Activated T-helper 1 cell treated with anti-CD3 and anti-CD28 coated beads, Interleukin-12 subunit alpha, Interleukin-12 subunit beta, Interleukin-2, Interleukin-4 antibody, amounts not matched to agents 30 ng/mL and 10 ng/mL and 1 ng/mL, durations not matched to agents 14 hours and 24 hours and 36 hours (primary cell): ENCODE measurements at regions of chr19 and their contacts with region 1.

Region 1: DNA sequence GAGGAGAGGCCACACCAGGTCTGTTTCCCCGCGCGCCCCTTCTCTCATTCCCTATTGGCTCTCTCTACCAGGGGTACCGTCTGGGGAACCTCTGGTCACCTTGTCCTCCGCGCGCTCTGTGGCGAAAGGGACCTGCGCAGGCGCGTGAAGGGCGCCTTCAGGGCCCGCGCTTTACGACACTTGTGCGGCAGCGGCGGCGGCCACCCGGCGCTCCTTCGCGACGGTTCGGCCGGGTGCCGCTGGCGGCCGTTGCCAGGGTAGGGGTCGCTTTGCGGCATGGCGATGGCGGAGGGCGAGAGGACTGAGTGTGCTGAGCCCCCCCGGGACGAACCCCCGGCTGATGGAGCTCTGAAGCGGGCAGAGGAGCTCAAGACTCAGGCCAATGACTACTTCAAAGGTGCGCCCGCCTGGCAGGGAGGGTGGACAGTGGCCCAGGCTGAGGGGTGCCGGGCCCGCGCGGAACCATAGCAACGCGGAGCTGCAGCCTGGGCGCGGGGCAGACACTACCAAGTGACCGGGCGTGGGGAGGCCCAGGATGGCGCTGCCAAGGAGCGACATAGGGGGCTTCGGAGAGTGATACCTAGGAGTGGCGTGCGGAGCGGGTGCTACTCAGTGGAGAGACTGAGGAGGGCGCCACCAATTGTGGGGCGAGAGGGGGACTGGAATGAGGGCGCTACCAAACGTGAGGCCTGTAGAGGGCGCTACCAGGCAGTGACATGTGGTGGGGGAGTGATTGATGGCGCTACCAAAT is at the start of gene PPP5C:
- DNase-seq: peak; percentile 86
- H3K4me3 Mint-ChIP-seq: peak within 1 kb of the TSS; percentile 94
- H3K27ac Mint-ChIP-seq: peak within 1 kb of the TSS; percentile 93
- H3K4me1 Mint-ChIP-seq: peaks cover 48% of the 10 kb centered on the region
- H3K27me3 Mint-ChIP-seq: peaks cover 17% of the 10 kb centered on the region
- total RNA-seq, gene PPP5C: 160 and 173 TPM in 2 replicates

Region 2: GRCh38 chr19:46056536-46056935 is 290.5 kb before region 1 on chr19:
- intact Hi-C with region 1: no loop called
- DNase-seq: no peak
- H3K4me3 Mint-ChIP-seq: no peak overlapping the region
- H3K27ac Mint-ChIP-seq: no peak overlapping the region
- H3K4me1 Mint-ChIP-seq: no peaks in the 10 kb centered on the region
- H3K27me3 Mint-ChIP-seq: peaks cover 27% of the 10 kb centered on the region

Region 3: GRCh38 chr19:46283771-46284170 is 63.2 kb before region 1 on chr19:
- intact Hi-C with region 1: loop called (anchors 1 kb)
- DNase-seq: no peak
- H3K4me3 Mint-ChIP-seq: no peak overlapping the region
- H3K27ac Mint-ChIP-seq: no peak overlapping the region
- H3K4me1 Mint-ChIP-seq: no peaks in the 10 kb centered on the region
- H3K27me3 Mint-ChIP-seq: peaks cover 6% of the 10 kb centered on the region

Region 4: GRCh38 chr19:46361915-46362314 is 14.9 kb after region 1 on chr19:
- intact Hi-C with region 1: loop called (anchors 1 kb)
- DNase-seq: no peak
- H3K4me3 Mint-ChIP-seq: peak overlapping the region; percentile 73
- H3K27ac Mint-ChIP-seq: peak overlapping the region; percentile 53
- H3K4me1 Mint-ChIP-seq: peaks cover 34% of the 10 kb centered on the region
- H3K27me3 Mint-ChIP-seq: no peaks in the 10 kb centered on the region

Region 5: DNA sequence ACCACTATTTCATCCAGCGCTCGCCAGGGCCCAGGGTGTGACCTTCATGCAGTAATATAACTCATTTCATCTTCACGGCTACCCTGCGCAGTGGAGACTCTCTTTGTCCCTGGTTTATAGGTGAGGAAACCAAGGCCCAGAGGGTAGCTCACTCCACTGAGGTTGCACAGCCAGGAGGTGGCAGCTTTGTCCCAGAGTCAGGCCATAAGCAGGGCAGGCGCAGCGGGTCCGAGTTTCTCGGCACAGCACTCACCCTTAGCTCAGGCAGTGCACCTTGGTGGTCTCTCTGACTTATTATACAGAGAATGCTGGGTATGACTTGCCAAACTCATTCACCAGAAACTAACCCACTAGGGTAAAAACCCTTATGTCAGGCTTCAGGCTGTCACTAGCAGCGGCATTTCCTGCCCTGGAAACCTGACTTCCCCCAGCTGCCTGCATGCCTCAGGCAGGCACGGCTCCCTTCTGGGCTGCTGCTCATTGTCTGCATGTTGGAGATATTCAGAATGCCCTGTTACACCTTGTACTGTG is 24.4 kb after region 1 on chr19:
- intact Hi-C with region 1: loop called (anchors 2 kb)
- DNase-seq: no peak
- H3K4me3 Mint-ChIP-seq: no peak overlapping the region
- H3K27ac Mint-ChIP-seq: peak overlapping the region; percentile 61
- H3K4me1 Mint-ChIP-seq: peaks cover 30% of the 10 kb centered on the region
- H3K27me3 Mint-ChIP-seq: peaks cover 2% of the 10 kb centered on the region

Region 6: GRCh38 chr19:46392243-46392801 is 45.3 kb after region 1 on chr19:
- intact Hi-C with region 1: loop called (anchors 1 kb)
- DNase-seq: no peak
- H3K4me3 Mint-ChIP-seq: no peak overlapping the region
- H3K27ac Mint-ChIP-seq: no peak overlapping the region
- H3K4me1 Mint-ChIP-seq: peaks cover 10% of the 10 kb centered on the region
- H3K27me3 Mint-ChIP-seq: no peaks in the 10 kb centered on the region

Region 7: GRCh38 chr19:46431824-46432223 is 84.8 kb after region 1 on chr19:
- intact Hi-C with region 1: no loop called
- DNase-seq: no peak
- H3K4me3 Mint-ChIP-seq: no peak overlapping the region
- H3K27ac Mint-ChIP-seq: no peak overlapping the region
- H3K4me1 Mint-ChIP-seq: peaks cover 33% of the 10 kb centered on the region
- H3K27me3 Mint-ChIP-seq: peaks cover 46% of the 10 kb centered on the region